AG04450 (cell line): ENCODE measurements at regions of chr3 and their contacts with region 1.

Region 1: DNA sequence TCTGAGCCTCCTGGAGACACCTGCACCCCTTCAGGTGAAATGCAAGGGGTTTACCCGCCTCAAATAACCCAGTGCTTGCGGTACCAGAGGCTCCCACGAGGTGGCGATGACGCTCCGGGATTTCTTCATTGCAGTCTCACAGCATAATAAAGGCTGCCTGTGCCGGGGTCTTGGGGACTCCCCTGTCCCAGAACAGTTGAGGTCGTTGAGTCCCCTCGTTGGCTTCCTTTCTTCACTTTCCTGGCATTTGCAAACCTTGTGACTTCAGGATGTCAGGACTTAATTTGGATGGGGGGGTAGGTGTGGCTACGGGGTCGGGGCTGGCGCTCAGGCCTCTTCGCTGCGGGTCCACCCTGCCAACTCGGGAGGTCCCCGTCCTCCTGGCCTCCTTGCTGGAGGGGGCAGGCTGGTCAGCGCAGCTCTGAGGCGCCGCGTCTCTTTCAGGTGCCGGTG is 1.3 kb downstream of the GNAT1 start:
- DNase-seq: peak; percentile 15
- H3K4me3 ChIP-seq: no peak overlapping the region
- H3K27ac ChIP-seq: no peak overlapping the region
- H3K27me3 ChIP-seq: peaks cover 36% of the 10 kb centered on the region
- CTCF ChIP-seq: peak; percentile 93

Region 2: DNA sequence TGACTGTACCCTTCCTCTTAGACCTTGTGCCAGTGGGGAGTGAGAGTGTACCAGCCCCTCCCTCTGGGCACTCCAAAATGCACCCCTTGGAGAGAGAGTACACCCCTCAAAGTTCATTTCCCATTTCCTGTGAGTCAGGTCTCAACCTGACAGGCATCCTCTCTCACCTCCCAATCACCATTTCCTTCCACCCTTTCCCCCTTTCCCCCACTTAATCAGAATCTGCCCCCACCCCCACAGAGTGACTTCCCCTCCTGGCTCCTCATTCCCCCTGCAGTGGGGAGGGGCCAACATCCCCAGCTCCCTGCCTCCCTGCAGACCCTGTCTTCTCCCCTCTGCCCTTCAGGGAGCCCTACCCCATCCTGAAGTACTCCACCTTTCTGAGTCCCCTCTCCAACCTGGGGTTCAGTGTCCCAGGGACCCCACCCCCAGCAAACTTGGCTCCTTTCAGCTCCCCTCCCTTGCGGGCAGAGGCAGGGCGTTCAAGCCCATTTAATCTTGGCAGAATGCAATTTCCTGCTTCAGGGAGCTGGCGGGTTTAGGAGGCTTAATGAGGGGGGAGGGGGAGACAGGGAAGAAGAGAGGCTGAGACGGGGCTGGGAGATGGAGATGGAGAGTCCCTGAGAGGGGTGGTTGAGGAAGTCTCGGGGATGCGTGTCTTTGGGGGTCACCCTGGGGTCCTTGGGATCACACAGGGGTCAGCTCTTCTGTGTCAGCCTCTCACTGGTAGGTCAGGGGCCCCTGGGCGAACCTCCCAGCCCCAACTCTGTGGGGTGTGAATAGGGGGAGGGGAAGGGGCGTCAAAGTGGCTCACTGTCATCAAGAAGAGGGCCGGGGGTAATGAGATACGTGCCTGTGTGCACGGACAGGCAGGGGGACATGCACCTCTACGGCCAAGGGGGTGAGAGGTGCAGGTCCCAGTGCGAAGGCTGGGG is 54.2 kb before region 1 on chr3:
- CTCF ChIA-PET with region 1: interaction called, 5 read pairs
- POLR2A ChIA-PET with region 1: interaction called, 10 read pairs
- DNase-seq: no peak
- H3K4me3 ChIP-seq: no peak overlapping the region
- H3K27ac ChIP-seq: no peak overlapping the region
- H3K27me3 ChIP-seq: peaks cover 8% of the 10 kb centered on the region
- CTCF ChIP-seq: no peak

Region 3: DNA sequence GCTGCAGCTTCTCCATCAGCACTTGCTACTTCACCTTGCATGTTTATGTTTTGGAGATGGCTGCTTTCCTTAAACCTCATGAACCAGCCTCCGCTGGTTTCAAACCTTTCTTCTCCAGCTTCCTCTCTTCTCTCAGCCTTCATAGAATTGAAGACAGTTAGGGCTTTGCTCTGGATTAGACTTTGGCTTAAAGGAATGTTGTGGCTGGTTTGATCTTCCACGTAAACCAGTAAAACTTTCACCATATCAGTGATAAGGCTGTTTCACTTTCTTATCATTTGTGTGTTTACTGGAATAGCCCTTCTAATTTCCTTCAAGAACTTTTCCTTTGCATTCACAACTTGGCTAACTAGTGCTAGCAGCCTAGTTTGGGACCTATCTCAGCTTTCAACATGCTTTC is 13.0 kb before region 1 on chr3:
- CTCF ChIA-PET with region 1: interaction called, 12 read pairs
- POLR2A ChIA-PET with region 1: no interaction called
- DNase-seq: no peak
- H3K4me3 ChIP-seq: no peak overlapping the region
- H3K27ac ChIP-seq: no peak overlapping the region
- H3K27me3 ChIP-seq: no peaks in the 10 kb centered on the region
- CTCF ChIP-seq: no peak

Region 4: GRCh38 chr3:50211930-50212329 is 19.2 kb after region 1 on chr3:
- CTCF ChIA-PET with region 1: interaction called, 324 read pairs
- POLR2A ChIA-PET with region 1: interaction called, 3 read pairs
- DNase-seq: no peak
- H3K4me3 ChIP-seq: no peak overlapping the region
- H3K27ac ChIP-seq: no peak overlapping the region
- H3K27me3 ChIP-seq: peaks cover 16% of the 10 kb centered on the region
- CTCF ChIP-seq: no peak

Region 5: GRCh38 chr3:50235716-50236496 is 43.2 kb after region 1 on chr3 and contains the start of gene GNAI2:
- CTCF ChIA-PET with region 1: interaction called, 11 read pairs
- POLR2A ChIA-PET with region 1: interaction called, 6 read pairs
- DNase-seq: peak; percentile 94
- H3K4me3 ChIP-seq: peak within 1 kb of the TSS; percentile 95
- H3K27ac ChIP-seq: peak within 1 kb of the TSS; percentile 47
- H3K27me3 ChIP-seq: no peaks in the 10 kb centered on the region
- CTCF ChIP-seq: no peak
- polyA plus RNA-seq, gene GNAI2: 603 and 661 TPM in 2 replicates

Region 6: GRCh38 chr3:50268685-50269383 is 76.1 kb after region 1 on chr3 and contains the start of gene SEMA3B:
- CTCF ChIA-PET with region 1: interaction called, 11 read pairs
- POLR2A ChIA-PET with region 1: no interaction called
- DNase-seq: no peak
- H3K4me3 ChIP-seq: peak within 1 kb of the TSS; percentile 49
- H3K27ac ChIP-seq: peak within 1 kb of the TSS; percentile 52
- H3K27me3 ChIP-seq: no peaks in the 10 kb centered on the region
- CTCF ChIP-seq: no peak
- polyA plus RNA-seq, gene SEMA3B: 22.0 and 24.7 TPM in 2 replicates

Region 7: DNA sequence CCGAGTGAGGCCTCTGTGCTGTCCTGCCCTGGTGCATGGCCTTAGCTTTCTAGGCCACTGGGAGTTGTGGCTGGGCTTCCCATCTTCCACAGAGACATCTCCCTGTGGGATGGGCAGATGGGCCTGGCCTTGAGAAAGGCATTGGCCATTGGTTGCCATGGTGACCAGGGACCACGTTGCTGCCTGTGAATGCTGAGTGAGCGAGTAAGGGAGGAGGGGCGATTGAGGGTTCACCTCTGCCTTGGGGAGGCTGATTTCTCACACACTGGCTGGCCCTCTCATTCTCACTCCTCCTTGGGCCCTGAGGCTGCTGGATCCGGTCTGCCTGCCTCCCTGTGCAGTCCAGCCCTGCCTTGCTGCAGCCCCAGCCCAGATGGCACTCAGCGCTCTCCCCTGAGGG is 455.6 kb after region 1 on chr3:
- CTCF ChIA-PET with region 1: no interaction called
- POLR2A ChIA-PET with region 1: no interaction called
- DNase-seq: no peak
- H3K4me3 ChIP-seq: no peak overlapping the region
- H3K27ac ChIP-seq: no peak overlapping the region
- H3K27me3 ChIP-seq: no peaks in the 10 kb centered on the region
- CTCF ChIP-seq: no peak